T-cell (primary cell): ENCODE measurements at regions of chr7 and their contacts with region 1.

Region 1: DNA sequence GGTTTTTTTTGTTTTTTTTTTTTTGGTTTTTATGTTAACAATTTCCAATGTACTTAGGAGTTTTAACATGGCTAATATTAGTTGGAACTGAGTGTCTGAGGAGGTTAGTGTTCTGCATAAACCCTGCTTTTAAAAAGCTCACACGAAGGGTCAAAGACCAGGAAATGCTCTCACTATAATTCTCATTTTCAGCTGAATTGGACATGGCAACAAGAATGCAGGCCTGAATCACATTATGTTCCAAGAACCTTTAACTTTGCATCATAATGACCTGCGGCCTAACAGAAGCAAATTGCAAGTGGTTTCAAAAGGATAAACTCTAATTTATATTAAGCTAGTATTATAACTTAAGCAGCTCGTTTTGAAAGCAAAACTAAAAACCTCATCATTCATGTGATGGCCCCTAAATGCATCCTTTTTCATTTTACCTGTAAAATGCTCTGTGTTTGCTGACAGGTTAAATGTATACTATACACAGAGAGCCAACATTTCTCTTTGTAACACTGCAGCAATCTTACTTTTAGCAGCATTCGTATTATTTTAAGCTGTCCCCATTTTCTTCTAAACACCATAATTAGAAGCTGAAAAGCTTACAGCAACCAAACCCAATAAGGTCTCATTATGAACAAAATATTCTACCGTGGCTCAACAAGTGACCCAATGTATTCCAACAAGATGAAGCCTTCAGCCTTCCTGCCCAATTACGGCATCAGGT is 242.8 kb upstream of the SP4 start:
- DNase-seq: no peak
- ATAC-seq: no peak
- H3K4me3 ChIP-seq: no peak overlapping the region
- H3K4me3 Mint-ChIP-seq: no peak overlapping the region
- H3K27ac ChIP-seq: no peak overlapping the region
- H3K27ac Mint-ChIP-seq: no peak overlapping the region
- H3K4me1 ChIP-seq: no peaks in the 10 kb centered on the region
- H3K4me1 Mint-ChIP-seq: no peaks in the 10 kb centered on the region
- H3K27me3 ChIP-seq: peaks cover 0 to 5% of the 10 kb centered on the region in 2 experiments
- H3K27me3 Mint-ChIP-seq: peaks cover 11 to 22% of the 10 kb centered on the region in 2 donors

Region 2: DNA sequence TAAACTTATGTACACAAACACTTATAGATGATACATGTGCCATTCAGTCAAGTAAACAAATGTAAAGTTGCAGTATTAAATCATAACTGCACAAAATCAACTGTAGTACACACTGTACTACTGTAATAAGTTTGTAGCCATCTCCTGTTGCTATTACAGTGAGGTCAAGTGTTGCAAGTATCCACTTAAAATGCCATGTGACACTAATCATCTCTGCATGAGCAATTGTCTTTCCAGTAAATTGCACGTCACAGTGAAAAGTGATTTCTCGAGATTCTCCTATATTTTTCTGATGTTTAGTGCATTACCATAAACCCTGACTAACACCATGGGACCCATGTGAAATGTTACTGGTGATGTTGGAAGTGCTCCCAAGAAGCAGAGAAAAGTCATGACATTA is 50.5 kb before region 1 on chr7:
- CTCF ChIA-PET with region 1: no interaction called
- POLR2A ChIA-PET with region 1: interaction called in 1 of 2 experiments, 20 read pairs
- DNase-seq: no peak
- ATAC-seq: no peak
- H3K4me3 ChIP-seq: no peak overlapping the region
- H3K4me3 Mint-ChIP-seq: no peak overlapping the region
- H3K27ac ChIP-seq: no peak overlapping the region
- H3K27ac Mint-ChIP-seq: no peak overlapping the region
- H3K4me1 ChIP-seq: no peaks in the 10 kb centered on the region
- H3K4me1 Mint-ChIP-seq: no peaks in the 10 kb centered on the region
- H3K27me3 ChIP-seq: no peaks in the 10 kb centered on the region
- H3K27me3 Mint-ChIP-seq: peaks cover 10 to 19% of the 10 kb centered on the region in 2 donors